Activated T-helper 2 cell treated with anti-CD3 and anti-CD28 coated beads, Interferon-gamma antibody, Interleukin-2, Interleukin-4, amounts not matched to agents 10 μg/mL and 5 μg/mL and 100 μg/mL, durations not matched to agents 14 hours and 24 hours and 36 hours (primary cell): ENCODE measurements at regions of chr3 and their contacts with region 1.

Region 1: GRCh38 chr3:106013971-106014370 is 145.2 kb upstream of the CBLB start:
- DNase-seq: no peak
- H3K4me3 Mint-ChIP-seq: no peak overlapping the region
- H3K27ac Mint-ChIP-seq: peak overlapping the region; percentile 5
- H3K4me1 Mint-ChIP-seq: peaks cover 45% of the 10 kb centered on the region
- H3K27me3 Mint-ChIP-seq: no peaks in the 10 kb centered on the region

Region 2: DNA sequence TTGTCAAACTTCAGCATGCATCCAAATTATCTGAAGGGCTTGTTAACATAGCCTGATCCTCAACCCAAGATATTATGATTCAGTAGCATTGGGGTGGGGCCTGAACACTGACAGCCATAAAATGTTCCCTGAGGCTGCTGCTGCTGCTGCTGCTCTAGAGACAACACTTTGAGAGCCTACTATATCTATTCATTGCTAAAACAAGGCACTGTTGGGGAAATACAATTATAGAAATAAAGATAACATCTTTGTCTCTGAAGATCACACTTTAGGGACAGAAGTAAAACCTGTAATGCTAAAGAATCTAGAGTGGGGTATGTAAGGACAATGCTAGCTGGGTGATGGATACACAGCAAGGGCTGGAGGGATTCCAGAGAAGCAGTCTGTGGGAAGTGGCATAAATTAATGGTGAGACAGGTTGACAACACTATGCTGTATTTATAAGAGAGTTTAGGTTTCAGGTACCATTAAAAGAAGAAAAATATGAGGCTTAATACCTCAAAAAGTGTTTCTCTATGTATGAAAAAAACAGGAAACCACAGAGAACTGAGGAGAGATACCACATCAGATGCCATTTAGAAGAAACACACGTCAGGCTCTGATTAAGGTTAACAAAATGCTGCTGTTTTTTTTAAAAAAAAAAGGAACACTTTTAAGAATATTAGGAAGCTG is 261.1 kb before region 1 on chr3:
- intact Hi-C with region 1: loop called (anchors 5 kb)
- DNase-seq: peak; percentile 39
- H3K4me3 Mint-ChIP-seq: peak overlapping the region; percentile 48
- H3K27ac Mint-ChIP-seq: peak overlapping the region; percentile 95
- H3K4me1 Mint-ChIP-seq: peaks cover 70% of the 10 kb centered on the region
- H3K27me3 Mint-ChIP-seq: no peaks in the 10 kb centered on the region

Region 3: DNA sequence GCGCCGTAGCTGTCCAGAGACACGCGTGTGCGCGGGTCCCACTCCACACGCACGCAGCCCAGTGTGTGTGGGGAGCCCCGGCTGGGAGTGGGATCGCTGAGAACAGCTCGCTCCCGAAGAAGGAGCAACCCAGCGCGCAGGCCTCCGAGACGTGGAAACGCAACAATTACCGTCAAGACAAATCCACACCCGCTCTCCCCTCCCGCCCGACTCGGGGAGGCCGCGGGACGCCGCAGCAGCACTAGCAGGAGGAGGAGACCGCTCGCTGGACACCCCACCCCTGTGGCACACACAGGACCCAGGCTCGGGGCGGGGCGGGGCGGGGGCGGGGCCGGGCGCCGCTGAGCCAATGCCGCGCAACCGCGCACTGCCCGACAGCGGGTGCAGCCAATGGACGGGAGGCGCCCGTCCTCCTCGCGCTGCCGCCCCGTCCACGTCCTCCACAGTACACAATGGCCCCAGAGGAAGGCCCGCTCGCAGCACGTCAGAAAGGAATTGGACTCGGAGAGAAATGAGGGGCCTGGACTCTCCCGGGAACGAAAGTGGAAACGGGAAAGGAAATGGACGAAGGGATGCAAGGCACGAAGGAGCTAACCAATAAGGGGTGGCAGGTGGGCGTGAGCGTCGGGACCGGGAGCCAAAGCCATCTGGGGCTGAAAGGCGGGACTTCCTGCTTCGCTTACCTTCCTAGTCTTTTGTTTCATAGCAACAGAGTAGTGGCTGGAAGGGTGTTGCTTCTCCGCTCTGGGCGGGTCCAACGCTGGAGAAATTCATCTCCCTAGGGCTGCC is 145.0 kb before region 1 on chr3 and contains the start of gene CBLB:
- intact Hi-C with region 1: loop called (anchors 2 kb)
- DNase-seq: peak; percentile 82
- H3K4me3 Mint-ChIP-seq: peak within 1 kb of the TSS; percentile 89
- H3K27ac Mint-ChIP-seq: peak within 1 kb of the TSS; percentile 93
- H3K4me1 Mint-ChIP-seq: peaks cover 26% of the 10 kb centered on the region
- H3K27me3 Mint-ChIP-seq: no peaks in the 10 kb centered on the region
- total RNA-seq, gene CBLB: 146 and 152 TPM in 2 replicates

Region 4: GRCh38 chr3:105987809-105988208 is 26.2 kb before region 1 on chr3:
- intact Hi-C with region 1: no loop called
- DNase-seq: no peak
- H3K4me3 Mint-ChIP-seq: peak overlapping the region; percentile 37
- H3K27ac Mint-ChIP-seq: no peak overlapping the region
- H3K4me1 Mint-ChIP-seq: peaks cover 25% of the 10 kb centered on the region
- H3K27me3 Mint-ChIP-seq: no peaks in the 10 kb centered on the region

Region 5: DNA sequence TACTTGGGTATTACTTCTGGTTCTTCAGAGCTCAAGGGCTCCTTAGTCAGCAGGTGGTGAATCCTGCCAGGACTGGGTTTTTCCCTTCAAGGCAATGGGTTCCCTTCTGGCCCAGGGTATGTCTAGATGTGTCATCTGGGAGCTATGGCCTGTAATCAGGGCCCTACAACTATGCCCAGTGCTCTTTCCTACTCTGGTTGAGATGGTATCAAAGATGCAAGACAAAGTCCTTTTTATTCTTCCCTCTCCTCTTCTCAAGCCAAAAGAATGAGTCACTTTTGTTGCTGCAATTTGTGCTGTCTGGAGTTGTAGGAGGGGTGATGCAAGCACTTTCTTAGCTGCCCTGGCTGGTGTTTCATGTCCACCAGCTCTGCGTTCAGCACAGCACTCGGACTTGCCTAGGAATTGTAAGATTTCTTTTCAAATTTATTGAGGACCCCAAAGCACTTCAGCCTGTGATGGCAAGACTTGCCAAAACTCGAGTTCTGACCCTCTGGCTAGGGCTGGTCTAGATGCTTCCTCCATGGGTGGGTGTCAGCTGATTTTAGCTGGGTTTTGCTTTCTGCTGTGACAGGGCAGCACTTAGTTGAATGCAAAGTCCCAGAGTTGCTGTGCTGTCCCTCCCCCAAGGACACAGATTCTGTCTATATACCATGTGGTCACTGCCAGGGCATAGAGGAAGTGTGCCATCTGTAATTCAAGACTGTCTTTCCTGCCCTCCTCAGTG is 16.0 kb before region 1 on chr3:
- intact Hi-C with region 1: no loop called
- DNase-seq: no peak
- H3K4me3 Mint-ChIP-seq: no peak overlapping the region
- H3K27ac Mint-ChIP-seq: no peak overlapping the region
- H3K4me1 Mint-ChIP-seq: peaks cover 10% of the 10 kb centered on the region
- H3K27me3 Mint-ChIP-seq: no peaks in the 10 kb centered on the region

Region 6: GRCh38 chr3:106049821-106050220 is 35.9 kb after region 1 on chr3:
- intact Hi-C with region 1: loop called (anchors 2 kb)
- DNase-seq: no peak
- H3K4me3 Mint-ChIP-seq: no peak overlapping the region
- H3K27ac Mint-ChIP-seq: peak overlapping the region; percentile 85
- H3K4me1 Mint-ChIP-seq: peaks cover 21% of the 10 kb centered on the region
- H3K27me3 Mint-ChIP-seq: no peaks in the 10 kb centered on the region

Region 7: DNA sequence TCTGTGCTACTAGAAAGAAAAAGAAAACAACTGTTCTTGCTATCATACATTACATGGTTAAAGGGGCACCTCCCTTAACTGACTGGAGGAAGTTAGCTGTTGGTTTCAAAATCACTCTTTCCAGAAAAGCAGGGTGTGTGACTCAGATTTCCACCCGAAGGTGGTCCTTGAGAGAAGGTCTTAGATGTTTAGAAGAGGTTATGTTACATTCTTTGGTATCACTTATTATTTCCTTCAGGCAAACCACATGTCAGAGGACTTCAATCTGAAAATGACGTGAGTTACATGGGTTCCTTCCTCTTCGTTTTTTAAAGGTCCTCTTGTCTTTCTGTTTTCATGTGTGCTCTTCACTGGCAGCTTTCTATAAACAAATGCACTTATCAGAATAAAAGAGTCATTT is 162.8 kb after region 1 on chr3:
- intact Hi-C with region 1: loop called (anchors 1 kb)
- DNase-seq: peak; percentile 72
- H3K4me3 Mint-ChIP-seq: peak overlapping the region; percentile 57
- H3K27ac Mint-ChIP-seq: peak overlapping the region; percentile 91
- H3K4me1 Mint-ChIP-seq: peaks cover 59% of the 10 kb centered on the region
- H3K27me3 Mint-ChIP-seq: no peaks in the 10 kb centered on the region

Region 8: DNA sequence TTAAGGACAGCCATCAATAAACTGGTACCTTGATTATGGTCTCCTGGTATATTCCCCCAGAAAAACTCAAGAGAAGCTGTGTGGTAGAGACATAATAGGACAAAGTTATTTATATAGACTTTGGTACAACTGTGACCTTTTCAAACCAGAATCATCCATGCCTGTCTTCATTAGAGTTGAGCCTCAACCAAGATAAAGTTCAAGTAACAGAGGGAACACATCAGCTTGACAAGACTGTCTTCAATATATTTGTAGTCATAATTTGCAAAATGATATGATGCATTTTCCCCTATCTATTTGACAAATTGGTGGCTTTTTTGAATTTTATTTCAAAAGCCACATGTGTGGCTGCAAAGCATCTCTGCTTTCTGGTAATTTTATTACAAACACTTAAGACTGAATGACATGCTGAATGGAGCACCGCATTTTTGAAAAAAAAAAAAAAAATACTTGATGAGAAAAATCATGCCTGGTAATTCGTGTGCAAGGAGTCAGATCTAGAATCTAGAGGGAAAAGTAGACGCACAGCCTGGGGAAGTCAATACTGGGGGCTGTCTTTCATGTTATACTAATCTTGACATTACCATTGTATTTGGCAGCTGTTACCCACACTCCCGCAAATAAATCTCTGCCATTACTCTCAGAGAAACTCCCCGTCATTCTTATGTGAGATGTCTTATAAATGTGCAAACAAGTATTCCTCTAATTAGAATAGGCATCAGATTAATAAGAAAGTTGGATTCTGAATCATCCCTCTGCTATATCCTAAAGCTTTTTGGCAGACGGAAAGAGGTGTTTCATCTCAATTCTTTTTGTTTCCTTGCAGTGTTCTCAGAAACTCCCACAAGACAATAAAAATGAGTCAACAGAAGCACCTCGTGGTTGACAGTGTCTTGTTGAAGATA is 409.6 kb after region 1 on chr3:
- intact Hi-C with region 1: loop called (anchors 1 kb)
- DNase-seq: no peak
- H3K4me3 Mint-ChIP-seq: peak overlapping the region; percentile 20
- H3K27ac Mint-ChIP-seq: peak overlapping the region; percentile 78
- H3K4me1 Mint-ChIP-seq: peaks cover 47% of the 10 kb centered on the region
- H3K27me3 Mint-ChIP-seq: no peaks in the 10 kb centered on the region